A673 (cell line): ENCODE measurements at regions of chr16 and their contacts with region 1.

Region 1: GRCh38 chr16:85463722-85464424 is 149.2 kb upstream of the GSE1 start:
- DNase-seq: no peak
- H3K4me3 ChIP-seq: no peak overlapping the region
- H3K27ac ChIP-seq: no peak overlapping the region
- H3K4me1 ChIP-seq: peaks cover 26% of the 10 kb centered on the region
- H3K27me3 ChIP-seq: no peaks in the 10 kb centered on the region
- CTCF ChIP-seq: no peak

Region 2: GRCh38 chr16:85569615-85570212 is 105.8 kb after region 1 on chr16:
- CTCF ChIA-PET with region 1: no interaction called
- POLR2A ChIA-PET with region 1: interaction called, 16 read pairs
- intact Hi-C with region 1: no loop called
- DNase-seq: peak; percentile 94
- H3K4me3 ChIP-seq: no peak overlapping the region
- H3K27ac ChIP-seq: peak overlapping the region; percentile 85
- H3K4me1 ChIP-seq: peaks cover 43% of the 10 kb centered on the region
- H3K27me3 ChIP-seq: no peaks in the 10 kb centered on the region
- CTCF ChIP-seq: no peak